KBM-7 (cell line): ENCODE measurements at regions of chr16 and their contacts with region 1.

Region 1: DNA sequence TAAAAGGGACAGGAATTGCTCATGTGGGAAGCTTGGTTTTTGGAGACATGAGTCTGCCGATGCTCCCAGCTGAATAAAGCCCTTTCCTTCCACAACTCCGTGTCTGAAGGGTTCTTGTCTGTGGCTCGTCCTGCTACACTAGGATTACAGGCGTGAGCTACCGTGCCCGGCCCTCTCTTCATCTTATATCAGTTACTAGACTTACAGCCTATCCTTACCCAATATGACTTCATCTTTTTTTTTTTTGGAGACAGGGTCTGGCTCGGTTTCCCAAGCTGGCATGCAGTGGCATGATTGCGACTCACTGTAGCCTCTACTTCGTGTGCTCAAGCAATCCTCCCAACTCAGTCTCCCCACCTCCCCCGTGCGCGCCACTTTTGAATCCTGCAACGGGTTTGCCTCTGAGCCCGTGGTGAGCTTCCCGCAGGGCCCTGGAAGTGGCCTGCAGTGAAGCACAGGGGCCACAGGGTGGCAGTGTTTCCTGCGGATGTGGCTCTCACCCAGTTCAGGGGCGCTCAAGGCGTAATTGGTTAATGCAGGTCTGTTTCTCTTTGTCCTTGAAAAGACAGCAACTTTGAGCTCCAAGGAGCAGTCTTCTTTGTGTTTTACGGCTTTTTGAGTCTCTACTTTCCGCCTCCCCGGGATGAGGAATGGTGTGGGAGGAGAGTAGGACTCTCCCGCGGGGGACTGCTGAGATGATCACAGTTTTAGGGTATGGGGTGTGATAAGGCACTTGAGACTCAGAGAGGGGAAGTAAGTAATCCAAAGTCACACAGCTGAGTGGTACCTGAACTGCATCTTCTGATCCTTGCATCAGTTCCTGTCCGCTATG is 22.7 kb upstream of the GPRC5B start:
- DNase-seq: peak; percentile 78

Region 2: DNA sequence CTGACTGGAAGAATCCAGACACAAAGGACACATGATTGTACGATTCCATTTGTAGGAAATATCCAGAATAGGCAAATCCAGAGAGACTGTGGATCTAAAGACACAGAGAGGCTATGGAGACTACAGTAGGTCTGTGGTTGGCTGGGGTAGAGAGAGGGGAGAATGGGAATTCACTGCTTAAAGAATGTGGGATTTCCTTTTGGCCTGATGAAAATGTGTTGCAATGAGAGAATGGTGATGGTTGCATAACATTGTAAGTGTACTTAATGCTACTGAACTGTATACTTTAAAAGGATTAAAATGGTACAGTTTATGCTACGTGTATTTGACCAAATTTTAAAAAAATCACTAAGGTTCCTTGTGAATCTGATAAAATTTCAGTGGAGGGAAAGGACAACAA is 84.8 kb before region 1 on chr16:
- in situ Hi-C with region 1: no loop called
- DNase-seq: no peak

Region 3: DNA sequence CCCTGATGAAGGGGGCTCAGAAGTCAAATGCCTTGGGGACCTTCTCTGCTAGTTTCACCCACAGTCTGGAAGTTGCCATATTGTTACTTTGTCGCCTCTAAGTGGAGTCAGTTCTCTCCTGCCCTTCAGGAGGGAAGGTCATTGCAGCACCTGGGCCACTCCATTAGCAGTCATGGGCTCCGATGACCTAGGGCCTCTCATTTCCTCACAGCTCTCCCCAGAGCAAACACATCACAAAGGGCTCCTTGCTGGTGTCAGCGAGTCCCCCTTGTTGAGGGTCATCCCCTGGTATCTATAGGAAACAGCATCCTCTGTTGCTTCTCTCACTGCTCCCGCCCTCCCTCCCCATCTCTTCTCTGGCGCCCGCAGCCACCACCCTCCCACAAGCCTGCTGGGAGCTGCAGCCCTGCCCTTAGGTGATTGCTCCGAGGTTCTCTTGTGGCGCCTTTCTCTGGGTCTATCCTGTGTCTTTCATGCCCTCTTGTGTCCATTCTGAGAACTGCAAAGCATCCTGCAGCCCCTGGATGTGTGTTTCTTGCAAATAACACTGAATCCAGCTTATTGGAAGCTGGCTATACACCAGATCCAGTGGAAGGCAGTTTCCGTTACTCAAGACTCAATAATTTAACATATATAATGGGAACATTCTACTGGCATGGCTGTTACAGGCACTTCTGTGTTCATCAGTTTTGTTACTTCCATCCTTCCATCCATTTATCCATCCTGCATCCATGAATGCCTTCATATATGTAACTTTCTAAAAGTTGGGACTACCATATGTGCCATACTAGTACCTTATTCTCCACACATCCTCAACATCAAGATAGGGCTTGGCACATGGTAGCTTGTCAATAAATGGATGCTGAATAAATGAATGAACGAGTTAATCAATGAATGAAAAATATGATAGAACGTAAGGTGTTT is 476.0 kb after region 1 on chr16:
- in situ Hi-C with region 1: loop called (anchors 25 kb)
- DNase-seq: peak; percentile 84